Activated CD8-positive, alpha-beta T cell treated with anti-CD3 and anti-CD28 coated beads for 36 hours (primary cell): ENCODE measurements at regions of chr5 and their contacts with region 1.

Region 1: DNA sequence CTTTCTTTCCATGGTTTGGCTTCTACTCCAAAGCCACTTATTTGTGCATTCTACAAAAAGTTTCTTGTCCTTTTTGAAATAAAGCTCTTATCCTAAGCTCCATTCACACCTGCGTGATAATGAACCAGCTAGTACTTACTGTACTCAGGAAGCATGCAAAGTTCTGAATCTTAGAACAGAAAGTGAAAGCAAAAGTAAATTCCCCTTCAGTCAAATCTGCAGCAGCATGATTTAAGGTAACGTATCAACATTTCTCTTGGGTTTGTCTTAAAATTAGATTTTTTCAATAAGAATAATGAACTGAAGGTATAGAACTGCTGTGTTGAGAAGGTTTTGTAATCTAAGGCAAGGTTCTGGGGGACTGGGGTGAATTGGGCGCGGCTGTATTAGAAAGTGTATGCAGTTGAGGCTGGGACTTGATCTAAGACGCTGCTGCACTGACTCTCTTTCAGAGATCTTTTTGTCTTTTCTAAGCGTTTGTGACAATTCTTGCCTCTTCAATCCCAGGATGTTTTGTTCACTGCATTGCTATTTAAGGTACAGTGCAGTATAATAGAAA is at the start of gene ERAP2:
- DNase-seq: peak; percentile 28
- ATAC-seq: peak; percentile 70
- H3K4me3 Mint-ChIP-seq: peak within 1 kb of the TSS; percentile 89
- H3K27ac Mint-ChIP-seq: peak within 1 kb of the TSS; percentile 97
- H3K4me1 Mint-ChIP-seq: peaks cover 60% of the 10 kb centered on the region
- H3K27me3 Mint-ChIP-seq: no peaks in the 10 kb centered on the region
- CTCF ChIP-seq: no peak
- total RNA-seq, gene ERAP2: 43.0 to 44.5 TPM

Region 2: DNA sequence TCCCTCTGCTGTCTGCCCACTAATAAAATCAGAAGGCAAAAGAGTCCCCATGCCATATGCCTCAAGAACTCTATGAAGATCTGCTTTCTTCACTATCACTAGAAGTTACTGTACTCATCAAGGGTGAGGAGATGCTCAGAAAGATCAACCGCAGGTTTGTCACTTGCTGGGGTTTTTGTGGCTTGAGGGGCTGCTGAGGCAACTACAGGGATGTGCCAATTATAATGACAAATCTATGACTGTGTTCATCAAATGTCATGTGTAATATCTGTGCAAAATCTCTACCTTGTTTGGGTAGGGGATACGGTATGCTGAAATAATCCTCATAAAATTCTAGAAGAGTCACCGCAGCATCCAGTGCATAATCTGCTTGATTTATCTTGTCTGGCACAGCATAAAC is 81.6 kb before region 1 on chr5:
- CTCF ChIA-PET with region 1: no interaction called
- POLR2A ChIA-PET with region 1: no interaction called
- intact Hi-C with region 1: no loop called
- DNase-seq: peak; percentile 91
- ATAC-seq: peak; percentile 92
- H3K4me3 Mint-ChIP-seq: no peak overlapping the region
- H3K27ac Mint-ChIP-seq: peak overlapping the region; percentile 75
- H3K4me1 Mint-ChIP-seq: peaks cover 40% of the 10 kb centered on the region
- H3K27me3 Mint-ChIP-seq: no peaks in the 10 kb centered on the region
- CTCF ChIP-seq: no peak

Region 3: DNA sequence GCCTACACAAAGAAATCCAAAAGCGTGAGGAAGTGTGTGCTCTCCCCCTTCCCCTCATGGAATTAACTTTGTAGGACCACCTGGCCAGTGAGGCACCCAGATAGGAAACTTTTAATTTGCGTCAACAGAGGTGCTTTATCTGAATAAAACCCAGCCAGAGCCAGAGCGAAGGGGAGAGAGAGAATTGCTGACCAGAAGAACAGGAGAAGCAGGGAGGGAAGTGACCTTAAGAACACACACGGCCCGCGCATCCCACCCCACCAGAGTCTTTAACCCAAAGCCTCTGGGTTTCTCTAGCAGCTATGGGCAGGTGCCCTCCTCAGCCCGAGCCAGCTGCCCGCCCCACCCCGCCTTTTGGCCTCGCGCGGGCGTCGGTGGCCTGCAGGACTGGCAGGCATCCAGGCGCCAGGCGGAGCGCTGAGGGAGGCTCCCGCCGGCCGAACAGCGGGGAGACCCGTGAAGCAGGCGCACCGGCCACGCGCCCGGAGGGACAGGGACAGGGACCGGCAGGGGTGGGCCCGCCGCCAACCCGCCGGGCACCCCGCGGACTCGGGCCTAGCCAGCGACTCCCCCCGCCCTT is 69.2 kb before region 1 on chr5:
- CTCF ChIA-PET with region 1: interaction called, 11 read pairs
- POLR2A ChIA-PET with region 1: interaction called, 27 read pairs
- intact Hi-C with region 1: loop called (anchors 5 kb)
- DNase-seq: peak; percentile 49
- ATAC-seq: peak; percentile 5
- H3K4me3 Mint-ChIP-seq: peak overlapping the region; percentile 97
- H3K27ac Mint-ChIP-seq: peak overlapping the region; percentile 98
- H3K4me1 Mint-ChIP-seq: peaks cover 66% of the 10 kb centered on the region
- H3K27me3 Mint-ChIP-seq: no peaks in the 10 kb centered on the region
- CTCF ChIP-seq: no peak

Region 4: GRCh38 chr5:96829297-96829696 is 47.1 kb before region 1 on chr5:
- CTCF ChIA-PET with region 1: no interaction called
- POLR2A ChIA-PET with region 1: no interaction called
- intact Hi-C with region 1: no loop called
- DNase-seq: no peak
- ATAC-seq: no peak
- H3K4me3 Mint-ChIP-seq: no peak overlapping the region
- H3K27ac Mint-ChIP-seq: no peak overlapping the region
- H3K4me1 Mint-ChIP-seq: peaks cover 6% of the 10 kb centered on the region
- H3K27me3 Mint-ChIP-seq: no peaks in the 10 kb centered on the region
- CTCF ChIP-seq: no peak